Panc1 (cell line): ENCODE measurements at regions of chr5 and their contacts with region 1.

Region 1: GRCh38 chr5:9361835-9362234 is 184.0 kb downstream of the SEMA5A start:
- DNase-seq: peak; percentile 33
- ATAC-seq: no peak
- H3K4me3 ChIP-seq: no peak overlapping the region
- H3K27ac ChIP-seq: no peak overlapping the region
- H3K4me1 ChIP-seq: no peaks in the 10 kb centered on the region
- H3K27me3 ChIP-seq: no peaks in the 10 kb centered on the region
- CTCF ChIP-seq: peak; percentile 71

Region 2: DNA sequence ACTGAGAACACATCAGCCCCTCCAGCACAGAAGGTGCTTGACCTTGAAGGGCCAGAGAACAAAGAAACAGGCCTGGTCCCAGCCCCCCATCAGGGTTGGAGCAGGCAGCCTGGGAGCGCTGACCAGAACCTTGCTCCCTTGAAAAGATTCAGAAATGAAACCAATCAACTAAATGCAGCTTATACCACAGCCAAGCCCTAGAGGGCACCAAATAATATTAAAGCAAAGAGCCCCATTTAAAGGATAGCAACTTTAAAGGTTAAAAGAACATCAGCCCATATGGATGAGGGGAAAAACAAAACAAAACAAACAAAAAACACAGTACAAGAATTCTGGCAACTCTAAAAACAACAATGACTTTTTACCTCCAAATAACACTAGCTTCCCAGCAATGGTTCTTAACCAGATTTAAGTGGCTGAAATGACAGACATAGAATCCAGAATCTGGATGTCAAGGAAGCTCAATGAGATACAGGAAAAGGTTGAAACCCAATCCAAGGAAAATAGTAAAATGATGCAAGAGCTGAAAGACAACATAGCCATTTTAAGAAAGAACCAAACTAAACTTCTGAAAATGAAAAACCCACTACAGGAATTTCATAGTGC is 1021.0 kb before region 1 on chr5:
- CTCF ChIA-PET with region 1: interaction called, 14 read pairs
- POLR2A ChIA-PET with region 1: no interaction called
- in situ Hi-C with region 1: no loop called
- intact Hi-C with region 1: no loop called
- DNase-seq: no peak
- ATAC-seq: no peak
- H3K4me3 ChIP-seq: no peak overlapping the region
- H3K27ac ChIP-seq: no peak overlapping the region
- H3K4me1 ChIP-seq: no peaks in the 10 kb centered on the region
- H3K27me3 ChIP-seq: no peaks in the 10 kb centered on the region
- CTCF ChIP-seq: peak; percentile 53

Region 3: GRCh38 chr5:9015260-9015936 is 346.4 kb before region 1 on chr5:
- CTCF ChIA-PET with region 1: no interaction called
- POLR2A ChIA-PET with region 1: no interaction called
- in situ Hi-C with region 1: no loop called
- intact Hi-C with region 1: no loop called
- DNase-seq: no peak
- ATAC-seq: no peak
- H3K4me3 ChIP-seq: no peak overlapping the region
- H3K27ac ChIP-seq: no peak overlapping the region
- H3K4me1 ChIP-seq: no peaks in the 10 kb centered on the region
- H3K27me3 ChIP-seq: no peaks in the 10 kb centered on the region
- CTCF ChIP-seq: no peak

Region 4: GRCh38 chr5:9313734-9314133 is 48.1 kb before region 1 on chr5:
- CTCF ChIA-PET with region 1: no interaction called
- POLR2A ChIA-PET with region 1: no interaction called
- in situ Hi-C with region 1: no loop called
- intact Hi-C with region 1: loop called (anchors 5 kb)
- DNase-seq: no peak
- ATAC-seq: no peak
- H3K4me3 ChIP-seq: no peak overlapping the region
- H3K27ac ChIP-seq: no peak overlapping the region
- H3K4me1 ChIP-seq: no peaks in the 10 kb centered on the region
- H3K27me3 ChIP-seq: no peaks in the 10 kb centered on the region
- CTCF ChIP-seq: no peak